A549 (cell line): ENCODE measurements at regions of chr7 and their contacts with region 1.

Region 1: GRCh38 chr7:155756322-155756721 is 55.9 kb downstream of the SHH start:
- DNase-seq: no peak
- ATAC-seq: no peak
- H3K4me3 ChIP-seq: no peak overlapping the region
- H3K27ac ChIP-seq: no peak overlapping the region
- H3K4me1 ChIP-seq: no peaks in the 10 kb centered on the region
- CTCF ChIP-seq: no peak
- EP300 ChIP-seq: no peak
- POLR2A ChIP-seq: no peak
- RAD21 ChIP-seq: no peak

Region 2: DNA sequence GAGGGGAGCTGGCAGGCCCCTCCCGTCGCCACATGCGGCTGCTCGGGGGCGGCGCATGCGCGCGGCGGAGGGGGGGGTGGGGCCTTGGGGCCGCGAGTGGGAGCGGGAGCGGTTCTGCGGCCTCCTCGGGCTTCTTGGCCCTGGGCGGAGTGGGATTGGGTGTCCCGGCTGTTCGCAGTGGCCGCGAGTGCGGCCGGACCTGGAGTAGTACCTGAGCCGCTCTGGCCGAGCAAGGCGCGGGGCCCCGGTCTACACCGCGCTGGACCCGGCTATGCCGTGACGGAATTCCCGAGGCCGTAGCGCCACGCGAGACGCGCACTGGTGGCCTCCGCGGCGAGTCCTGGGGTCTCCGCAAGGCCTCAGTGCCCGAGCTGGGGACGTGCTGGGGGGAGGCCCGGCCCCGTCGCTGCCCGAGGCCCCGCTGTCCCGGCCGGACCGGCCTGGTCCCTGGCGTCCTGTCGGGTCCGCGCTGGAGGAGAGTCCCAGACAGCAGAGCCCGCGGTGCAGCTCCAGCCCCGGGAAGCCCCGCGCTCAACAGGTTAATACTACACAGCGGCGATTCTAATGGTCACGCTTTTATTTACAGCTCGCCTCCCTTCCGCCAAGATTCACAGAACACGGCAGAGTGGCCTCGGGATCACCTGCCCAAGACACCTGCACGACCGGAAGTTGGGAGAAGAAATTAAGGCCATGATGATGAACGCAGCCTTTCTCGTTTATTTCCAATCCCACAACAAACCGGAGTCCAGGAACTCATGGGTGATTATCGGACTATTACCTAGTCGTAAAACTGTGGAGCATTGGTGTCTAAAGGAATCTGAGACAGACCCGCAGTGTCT is 752.7 kb before region 1 on chr7:
- CTCF ChIA-PET with region 1: no interaction called
- POLR2A ChIA-PET with region 1: no interaction called
- DNase-seq: peak; percentile 85 to 86
- ATAC-seq: peak; percentile 82 to 90
- H3K4me3 ChIP-seq: peak overlapping the region; percentile 96
- H3K27ac ChIP-seq: peak overlapping the region; percentile 98 to 100
- H3K4me1 ChIP-seq: peaks cover 6% of the 10 kb centered on the region; the same call in 1 of the 3 replicates
- CTCF ChIP-seq: no peak
- EP300 ChIP-seq: no peak
- POLR2A ChIP-seq: peak; percentile 73
- RAD21 ChIP-seq: no peak

Region 3: DNA sequence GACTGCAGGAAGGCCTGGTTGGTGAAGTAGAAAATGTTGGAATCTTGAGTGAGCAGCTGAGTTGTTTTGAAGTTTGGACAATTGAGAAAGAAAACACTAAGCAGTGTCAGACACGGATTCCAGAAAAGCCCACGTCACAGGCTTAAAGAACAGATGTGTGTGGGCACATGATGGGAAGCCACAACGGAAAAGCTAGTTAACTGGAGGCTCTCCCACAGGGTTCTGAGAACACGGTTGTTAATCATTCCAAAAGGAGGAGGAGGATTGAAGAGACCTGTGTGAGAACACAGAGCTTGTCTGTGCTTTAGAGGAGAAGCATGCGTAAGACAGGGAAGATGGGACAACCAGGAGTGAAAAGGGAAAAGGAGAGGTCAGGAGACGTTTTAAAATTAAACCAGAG is 13.4 kb after region 1 on chr7:
- CTCF ChIA-PET with region 1: interaction called, 14 read pairs
- POLR2A ChIA-PET with region 1: no interaction called
- DNase-seq: no peak
- ATAC-seq: no peak
- H3K4me3 ChIP-seq: no peak overlapping the region
- H3K27ac ChIP-seq: no peak overlapping the region
- H3K4me1 ChIP-seq: no peaks in the 10 kb centered on the region
- CTCF ChIP-seq: no peak
- EP300 ChIP-seq: no peak
- POLR2A ChIP-seq: no peak
- RAD21 ChIP-seq: no peak

Region 4: GRCh38 chr7:155796381-155797261 is 40.3 kb after region 1 on chr7:
- CTCF ChIA-PET with region 1: no interaction called
- POLR2A ChIA-PET with region 1: no interaction called
- DNase-seq: peak; percentile 48 to 86
- ATAC-seq: peak; percentile 80 to 94
- H3K4me3 ChIP-seq: peak overlapping the region; percentile 33; the same call in 2 of the 3 replicates
- H3K27ac ChIP-seq: peak overlapping the region; percentile 60 to 79; a peak in 4 of 6 replicates
- H3K4me1 ChIP-seq: 0 out of 3 replicates have a peak, but pooled peaks cover 3% of the 10 kb centered on the region
- CTCF ChIP-seq: peak; percentile 82
- EP300 ChIP-seq: no peak
- POLR2A ChIP-seq: no peak
- RAD21 ChIP-seq: peak; percentile 83 to 98